Caco-2 (cell line): ENCODE measurements at regions of chr2 and their contacts with region 1.

Region 1: GRCh38 chr2:46803911-46804670 is 111.5 kb downstream of the MCFD2 start:
- DNase-seq: no peak
- H3K4me3 ChIP-seq: no peak overlapping the region
- H3K4me3 Mint-ChIP-seq: no peak overlapping the region
- H3K27ac Mint-ChIP-seq: no peak overlapping the region
- H3K4me1 ChIP-seq: no peaks in the 10 kb centered on the region
- H3K4me1 Mint-ChIP-seq: no peaks in the 10 kb centered on the region
- H3K27me3 ChIP-seq: no peaks in the 10 kb centered on the region
- H3K27me3 Mint-ChIP-seq: peaks cover 11% of the 10 kb centered on the region
- CTCF ChIP-seq: no peak

Region 2: GRCh38 chr2:46831051-46831868 is 27.2 kb after region 1 on chr2:
- CTCF ChIA-PET with region 1: no interaction called
- POLR2A ChIA-PET with region 1: no interaction called
- intact Hi-C with region 1: loop called (anchors 2 kb)
- DNase-seq: no peak
- H3K4me3 ChIP-seq: no peak overlapping the region
- H3K4me3 Mint-ChIP-seq: no peak overlapping the region
- H3K27ac Mint-ChIP-seq: no peak overlapping the region
- H3K4me1 ChIP-seq: peaks cover 5% of the 10 kb centered on the region; the same call in 1 of the 2 replicates
- H3K4me1 Mint-ChIP-seq: no peaks in the 10 kb centered on the region
- H3K27me3 ChIP-seq: no peaks in the 10 kb centered on the region
- H3K27me3 Mint-ChIP-seq: peaks cover 3% of the 10 kb centered on the region
- CTCF ChIP-seq: no peak